WTC11 (cell line): ENCODE measurements at regions of chr12 and their contacts with region 1.

Region 1: GRCh38 chr12:57111031-57111734 is at the start of gene STAT6:
- DNase-seq: peak; percentile 48
- ATAC-seq: peak; percentile 8
- H3K4me3 Mint-ChIP-seq: peak within 1 kb of the TSS; percentile 72
- H3K27ac Mint-ChIP-seq: peak within 1 kb of the TSS; percentile 98
- H3K4me1 Mint-ChIP-seq: peaks cover 36% of the 10 kb centered on the region
- H3K27me3 Mint-ChIP-seq: no peaks in the 10 kb centered on the region
- CTCF ChIP-seq: no peak
- total RNA-seq, gene STAT6: 47.0 to 50.0 TPM (median 48.9 TPM) in 3 replicates

Region 2: GRCh38 chr12:57005980-57006808 is 105.0 kb before region 1 on chr12 and contains the start of gene ZBTB39:
- CTCF ChIA-PET with region 1: interaction called, 33 read pairs
- POLR2A ChIA-PET with region 1: no interaction called
- DNase-seq: peak; percentile 63
- ATAC-seq: peak; percentile 67
- H3K4me3 Mint-ChIP-seq: peak within 1 kb of the TSS; percentile 93
- H3K27ac Mint-ChIP-seq: no peak within 1 kb of the TSS
- H3K4me1 Mint-ChIP-seq: peaks cover 44% of the 10 kb centered on the region
- H3K27me3 Mint-ChIP-seq: no peaks in the 10 kb centered on the region
- CTCF ChIP-seq: no peak
- total RNA-seq, gene ZBTB39: 20.2 to 23.0 TPM (median 22.5 TPM) in 3 replicates

Region 3: DNA sequence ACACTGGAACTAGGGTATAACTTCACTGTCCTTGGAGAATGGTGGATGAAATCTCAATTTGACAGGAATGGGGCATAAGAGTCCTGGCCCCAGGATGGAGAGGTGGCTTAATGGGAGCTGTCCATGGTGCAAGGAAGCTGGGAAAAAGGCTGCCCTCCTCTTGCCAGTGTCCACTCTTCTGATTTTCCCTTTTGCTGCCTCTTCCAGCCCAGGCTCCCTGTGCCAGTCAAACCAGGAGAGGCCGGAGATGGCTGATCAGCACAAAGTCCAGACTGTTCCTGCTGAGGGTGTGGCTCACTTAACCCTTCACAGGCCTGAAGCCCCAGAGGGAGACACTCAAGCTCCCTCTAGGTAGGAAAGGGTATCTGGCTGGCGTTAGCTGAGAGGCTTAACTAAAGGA is 61.3 kb before region 1 on chr12 and contains the start of gene MYO1A:
- CTCF ChIA-PET with region 1: interaction called, 25 read pairs
- POLR2A ChIA-PET with region 1: no interaction called
- DNase-seq: no peak
- ATAC-seq: peak; percentile 60
- H3K4me3 Mint-ChIP-seq: no peak within 1 kb of the TSS
- H3K27ac Mint-ChIP-seq: no peak within 1 kb of the TSS
- H3K4me1 Mint-ChIP-seq: no peaks in the 10 kb centered on the region
- H3K27me3 Mint-ChIP-seq: no peaks in the 10 kb centered on the region
- CTCF ChIP-seq: no peak
- total RNA-seq, gene MYO1A: 0.32 to 0.87 TPM (median 0.71 TPM) in 3 replicates

Region 4: GRCh38 chr12:57088459-57089248 is 22.5 kb before region 1 on chr12 and contains the start of gene NAB2:
- CTCF ChIA-PET with region 1: interaction called, 219 read pairs
- POLR2A ChIA-PET with region 1: interaction called, 65 read pairs
- DNase-seq: peak; percentile 91
- ATAC-seq: peak; percentile 46
- H3K4me3 Mint-ChIP-seq: peak within 1 kb of the TSS; percentile 88
- H3K27ac Mint-ChIP-seq: peak within 1 kb of the TSS; percentile 100
- H3K4me1 Mint-ChIP-seq: peaks cover 40% of the 10 kb centered on the region
- H3K27me3 Mint-ChIP-seq: no peaks in the 10 kb centered on the region; the same call in 1 of the 2 replicates
- CTCF ChIP-seq: no peak
- total RNA-seq, gene NAB2: 16.5 to 20.5 TPM (median 17.2 TPM) in 3 replicates

Region 5: GRCh38 chr12:57175428-57176138 is 64.4 kb after region 1 on chr12:
- CTCF ChIA-PET with region 1: interaction called, 16 read pairs
- POLR2A ChIA-PET with region 1: no interaction called
- DNase-seq: peak; percentile 95
- ATAC-seq: peak; percentile 80
- H3K4me3 Mint-ChIP-seq: no peak overlapping the region
- H3K27ac Mint-ChIP-seq: peak overlapping the region; percentile 78
- H3K4me1 Mint-ChIP-seq: no peaks in the 10 kb centered on the region
- H3K27me3 Mint-ChIP-seq: no peaks in the 10 kb centered on the region
- CTCF ChIP-seq: peak; percentile 75